Dendritic cell treated with granulocyte-macrophage colony-stimulating factor and Interleukin-4, amounts not matched to agents 40 ng/mL and 50 ng/mL, for 4 days (primary cell): ENCODE measurements at regions of chr12 and their contacts with region 1.

Region 1: DNA sequence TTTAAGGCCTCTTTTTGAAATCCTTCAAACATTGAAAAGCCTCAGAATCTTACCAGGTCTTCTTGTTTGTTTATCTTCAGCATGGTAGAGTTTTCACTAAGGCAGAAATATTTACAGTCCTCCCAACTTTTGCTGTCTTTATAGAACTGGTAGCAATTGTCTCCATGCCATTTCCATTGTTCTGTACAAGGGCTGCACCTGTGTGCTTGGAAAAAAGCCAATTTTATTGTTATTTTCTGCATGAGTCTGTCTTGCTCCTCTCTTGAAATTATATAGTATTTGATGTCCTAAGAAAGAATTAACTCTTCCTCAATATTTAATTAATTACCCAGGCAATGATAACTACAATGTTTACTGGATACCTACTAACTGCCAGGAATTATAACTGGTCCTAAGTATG is 23.3 kb downstream of the CLEC1A start:
- H3K4me3 Mint-ChIP-seq: no peak overlapping the region
- H3K27ac Mint-ChIP-seq: no peak overlapping the region
- H3K4me1 Mint-ChIP-seq: peaks cover 27% of the 10 kb centered on the region
- H3K27me3 Mint-ChIP-seq: no peaks in the 10 kb centered on the region

Region 2: GRCh38 chr12:10012630-10013330 is 62.7 kb before region 1 on chr12:
- intact Hi-C with region 1: no loop called
- H3K4me3 Mint-ChIP-seq: no peak overlapping the region
- H3K27ac Mint-ChIP-seq: no peak overlapping the region
- H3K4me1 Mint-ChIP-seq: peaks cover 25% of the 10 kb centered on the region
- H3K27me3 Mint-ChIP-seq: no peaks in the 10 kb centered on the region

Region 3: GRCh38 chr12:10042167-10042566 is 33.3 kb before region 1 on chr12:
- intact Hi-C with region 1: loop called (anchors 5 kb)
- H3K4me3 Mint-ChIP-seq: no peak overlapping the region
- H3K27ac Mint-ChIP-seq: no peak overlapping the region
- H3K4me1 Mint-ChIP-seq: peaks cover 26% of the 10 kb centered on the region
- H3K27me3 Mint-ChIP-seq: no peaks in the 10 kb centered on the region